GM23248 (cell line): ENCODE measurements at regions of chr10 and their contacts with region 1.

Region 1: GRCh38 chr10:44386546-44387052 is 1.7 kb upstream of the CXCL12 start:
- DNase-seq: peak; percentile 88
- H3K4me3 ChIP-seq: peak overlapping the region; percentile 60
- H3K27ac ChIP-seq: no peak overlapping the region
- H3K4me1 ChIP-seq: peaks cover 18% of the 10 kb centered on the region
- H3K27me3 ChIP-seq: no peaks in the 10 kb centered on the region

Region 2: DNA sequence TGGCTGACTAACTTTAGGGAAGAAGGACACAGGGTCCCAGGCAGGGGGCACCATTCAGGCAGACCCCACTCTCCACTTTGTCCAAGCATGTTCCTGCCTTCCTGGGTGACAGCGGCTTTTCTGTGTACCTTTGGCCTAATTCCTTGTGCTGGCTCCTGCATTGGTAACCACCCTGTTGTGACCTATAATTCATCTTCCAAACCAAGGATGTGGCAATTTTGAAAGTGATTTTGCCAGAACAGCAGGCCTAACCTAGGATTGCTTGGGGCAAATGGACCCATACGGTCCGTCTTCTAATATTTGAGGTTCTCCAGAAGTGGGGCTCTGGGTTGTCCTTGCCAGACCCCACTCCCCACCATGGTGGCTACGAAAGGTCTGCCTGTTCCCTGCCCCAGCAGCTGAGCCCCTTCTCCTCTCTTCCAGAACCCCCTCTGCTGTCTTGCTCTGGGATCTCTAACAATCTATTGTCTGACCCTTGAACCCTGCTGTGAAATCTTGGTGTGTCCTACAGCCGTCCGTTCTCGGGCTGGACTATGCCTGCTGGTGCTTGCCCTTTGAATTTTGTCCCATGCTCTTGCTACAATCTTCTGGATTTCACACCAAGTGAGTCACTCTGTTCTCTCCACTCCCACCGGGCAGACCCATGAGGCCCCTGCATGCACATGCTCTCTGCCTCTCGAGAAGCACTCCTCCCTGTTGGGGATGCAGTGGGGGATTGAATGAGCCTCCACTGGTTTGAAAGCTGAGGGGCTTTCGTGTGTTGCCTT is 317.7 kb before region 1 on chr10:
- in situ Hi-C with region 1: loop called (anchors 10 kb)
- DNase-seq: peak; percentile 76
- H3K4me3 ChIP-seq: no peak overlapping the region
- H3K27ac ChIP-seq: 0 out of 2 replicates have a peak overlapping the region, but pooled peaks have one; percentile 12
- H3K4me1 ChIP-seq: peaks cover 30% of the 10 kb centered on the region
- H3K27me3 ChIP-seq: no peaks in the 10 kb centered on the region

Region 3: GRCh38 chr10:44180321-44181168 is 206.1 kb before region 1 on chr10:
- in situ Hi-C with region 1: loop called (anchors 10 kb)
- DNase-seq: peak; percentile 97
- H3K4me3 ChIP-seq: peak overlapping the region; percentile 30; the same call in 1 of the 2 replicates
- H3K27ac ChIP-seq: peak overlapping the region; percentile 62
- H3K4me1 ChIP-seq: peaks cover 44% of the 10 kb centered on the region
- H3K27me3 ChIP-seq: no peaks in the 10 kb centered on the region

Region 4: GRCh38 chr10:44857363-44858016 is 470.9 kb after region 1 on chr10:
- in situ Hi-C with region 1: loop called (anchors 10 kb)
- DNase-seq: peak; percentile 81
- H3K4me3 ChIP-seq: no peak overlapping the region
- H3K27ac ChIP-seq: no peak overlapping the region
- H3K4me1 ChIP-seq: peaks cover 23% of the 10 kb centered on the region
- H3K27me3 ChIP-seq: no peaks in the 10 kb centered on the region